ENCODE measurements at regions of chr6 and their contacts with region 1.

Region 1: GRCh38 chr6:33904050-33904746 is 100.4 kb upstream of the MLN start:
- DNase-seq: peak; percentile 89
- H3K4me3 Mint-ChIP-seq: peak overlapping the region; percentile 73
- H3K27ac Mint-ChIP-seq: peak overlapping the region; percentile 89
- H3K4me1 Mint-ChIP-seq: peaks cover 81% of the 10 kb centered on the region
- H3K27me3 Mint-ChIP-seq: peaks cover 2% of the 10 kb centered on the region

Region 2: GRCh38 chr6:33840048-33840926 is 63.9 kb before region 1 on chr6:
- intact Hi-C with region 1: loop called (anchors 2 kb)
- DNase-seq: peak; percentile 48
- H3K4me3 Mint-ChIP-seq: peak overlapping the region; percentile 28
- H3K27ac Mint-ChIP-seq: peak overlapping the region; percentile 73
- H3K4me1 Mint-ChIP-seq: peaks cover 20% of the 10 kb centered on the region
- H3K27me3 Mint-ChIP-seq: peaks cover 11% of the 10 kb centered on the region

Region 3: GRCh38 chr6:33860706-33861474 is 43.3 kb before region 1 on chr6:
- intact Hi-C with region 1: loop called (anchors 2 kb)
- DNase-seq: peak; percentile 51
- H3K4me3 Mint-ChIP-seq: peak overlapping the region; percentile 13
- H3K27ac Mint-ChIP-seq: peak overlapping the region; percentile 36
- H3K4me1 Mint-ChIP-seq: peaks cover 70% of the 10 kb centered on the region
- H3K27me3 Mint-ChIP-seq: peaks cover 2% of the 10 kb centered on the region

Region 4: DNA sequence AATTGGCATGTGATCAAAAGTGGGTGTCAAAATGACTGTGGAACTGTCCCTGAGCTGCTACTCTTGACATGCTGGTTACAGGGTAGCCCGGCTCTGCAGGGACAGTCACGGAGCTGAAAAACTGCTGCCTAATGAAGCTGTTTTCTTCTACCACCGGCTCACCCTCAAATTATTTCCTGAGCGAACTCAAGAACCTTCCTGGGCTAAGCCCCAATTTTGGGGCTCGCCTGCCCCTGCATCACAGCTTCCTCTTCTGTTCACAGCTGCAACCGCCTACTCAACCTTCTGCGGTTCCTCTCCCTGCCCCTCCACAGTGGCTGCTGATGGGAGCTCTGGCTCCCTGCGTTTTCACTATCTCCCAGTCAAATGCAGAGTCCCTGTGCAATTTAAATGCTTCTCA is 10.4 kb after region 1 on chr6:
- intact Hi-C with region 1: loop called (anchors 1 kb)
- DNase-seq: peak; percentile 37
- H3K4me3 Mint-ChIP-seq: peak overlapping the region; percentile 59
- H3K27ac Mint-ChIP-seq: peak overlapping the region; percentile 56
- H3K4me1 Mint-ChIP-seq: peaks cover 54% of the 10 kb centered on the region
- H3K27me3 Mint-ChIP-seq: peaks cover 3% of the 10 kb centered on the region

Region 5: DNA sequence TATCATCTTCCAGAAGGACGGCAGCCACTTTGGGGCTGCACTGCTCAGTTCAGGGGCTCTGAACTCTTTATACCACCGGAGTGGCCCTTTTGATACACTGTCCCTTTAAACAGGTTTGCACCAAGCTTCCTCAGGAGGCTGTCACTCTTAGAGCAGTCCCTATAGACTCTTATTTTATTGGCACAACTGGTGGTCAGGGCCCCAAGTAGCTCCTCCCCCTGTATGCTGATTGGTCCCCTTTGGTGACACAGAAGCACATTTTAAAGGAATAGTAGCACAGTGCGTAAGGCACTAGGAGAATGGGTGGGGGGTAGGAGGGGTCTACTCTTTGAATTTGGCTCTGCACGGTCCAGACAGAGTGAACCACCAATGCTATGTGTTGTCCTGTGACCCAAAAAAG is 22.3 kb after region 1 on chr6:
- intact Hi-C with region 1: no loop called
- DNase-seq: no peak
- H3K4me3 Mint-ChIP-seq: no peak overlapping the region
- H3K27ac Mint-ChIP-seq: no peak overlapping the region
- H3K4me1 Mint-ChIP-seq: no peaks in the 10 kb centered on the region
- H3K27me3 Mint-ChIP-seq: peaks cover 2% of the 10 kb centered on the region